ENCODE measurements at regions of chr6 and their contacts with region 1.

Region 1: DNA sequence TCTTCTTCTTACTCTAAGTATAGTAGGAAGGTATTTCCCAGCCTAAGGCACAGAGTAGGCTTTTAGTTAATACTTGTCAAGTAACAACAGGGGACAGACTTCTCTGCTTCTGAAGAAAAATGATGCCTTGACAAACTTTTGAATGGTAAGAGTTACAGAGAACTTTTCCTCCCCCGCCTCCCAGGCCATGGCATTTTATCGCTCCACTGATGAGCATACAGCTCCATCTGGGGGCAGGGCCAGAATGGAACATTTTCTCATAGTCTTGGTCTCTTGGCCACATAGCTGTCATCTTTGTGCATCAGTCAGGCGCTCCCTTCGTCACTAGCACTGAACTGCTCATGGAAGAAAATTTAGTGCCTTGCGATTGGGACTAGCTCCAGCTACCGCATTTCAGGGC is 1066.8 kb upstream of the CITED2 start:
- DNase-seq: peak; percentile 44
- ATAC-seq: peak; percentile 92

Region 2: GRCh38 chr6:139753198-139753861 is 687.9 kb before region 1 on chr6:
- intact Hi-C with region 1: loop called (anchors 10 kb)
- DNase-seq: no peak
- ATAC-seq: no peak

Measured in Right ventricle myocardium inferior (tissue), 1 donor.